ENCODE measurements at regions of chr1 and their contacts with region 1.

Region 1: DNA sequence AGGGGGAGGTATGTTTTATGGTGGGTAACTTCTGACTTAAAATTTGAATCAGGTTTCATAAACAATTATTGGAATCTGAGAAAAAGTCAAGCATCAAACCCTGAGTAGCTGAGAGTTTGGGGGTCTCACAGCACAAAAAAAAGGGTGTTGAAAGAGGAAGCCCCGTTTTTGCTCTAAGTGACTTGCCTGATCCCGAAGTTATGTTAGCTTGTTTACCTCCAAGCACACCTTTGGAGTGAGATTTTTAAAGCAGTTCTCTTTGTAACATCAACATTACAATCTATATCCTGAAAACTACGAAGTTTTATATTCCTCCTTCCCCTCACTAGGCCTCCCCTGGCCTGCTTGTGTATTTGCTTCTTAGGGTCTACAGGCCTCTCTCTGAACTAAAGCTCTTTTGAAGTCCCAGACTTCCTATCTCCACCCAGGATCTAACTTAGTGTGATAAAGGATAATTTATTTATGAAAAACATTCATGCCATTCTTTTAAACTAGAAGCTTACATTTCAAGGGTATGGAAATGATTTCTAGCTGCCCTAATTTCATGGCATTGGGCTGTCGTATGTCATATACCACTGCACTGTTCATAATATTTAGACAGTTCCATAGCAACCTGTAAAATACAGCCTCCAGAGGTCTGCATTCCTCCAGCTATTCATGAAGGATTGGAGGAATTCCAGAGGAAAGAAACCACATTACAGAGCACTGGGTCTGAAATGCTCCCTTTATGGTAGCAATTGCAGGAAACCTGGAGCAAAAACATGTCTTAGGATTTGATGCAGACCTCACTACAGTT is 36.1 kb upstream of the RGS1 start:
- DNase-seq: peak; percentile 25
- ATAC-seq: peak; percentile 16
- H3K4me3 ChIP-seq: no peak overlapping the region
- H3K4me3 Mint-ChIP-seq: peak overlapping the region; percentile 18
- H3K27ac ChIP-seq: peak overlapping the region in 1 of 2 donors; percentile 36
- H3K27ac Mint-ChIP-seq: peak overlapping the region; percentile 8
- H3K4me1 ChIP-seq: peaks cover 13 to 16% of the 10 kb centered on the region in 2 donors
- H3K4me1 Mint-ChIP-seq: peaks cover 35% of the 10 kb centered on the region
- H3K27me3 ChIP-seq: peaks cover 0 to 9% (median 0%) of the 10 kb centered on the region in 4 experiments
- H3K27me3 Mint-ChIP-seq: no peaks in the 10 kb centered on the region
- CTCF ChIP-seq: no peak

Region 2: DNA sequence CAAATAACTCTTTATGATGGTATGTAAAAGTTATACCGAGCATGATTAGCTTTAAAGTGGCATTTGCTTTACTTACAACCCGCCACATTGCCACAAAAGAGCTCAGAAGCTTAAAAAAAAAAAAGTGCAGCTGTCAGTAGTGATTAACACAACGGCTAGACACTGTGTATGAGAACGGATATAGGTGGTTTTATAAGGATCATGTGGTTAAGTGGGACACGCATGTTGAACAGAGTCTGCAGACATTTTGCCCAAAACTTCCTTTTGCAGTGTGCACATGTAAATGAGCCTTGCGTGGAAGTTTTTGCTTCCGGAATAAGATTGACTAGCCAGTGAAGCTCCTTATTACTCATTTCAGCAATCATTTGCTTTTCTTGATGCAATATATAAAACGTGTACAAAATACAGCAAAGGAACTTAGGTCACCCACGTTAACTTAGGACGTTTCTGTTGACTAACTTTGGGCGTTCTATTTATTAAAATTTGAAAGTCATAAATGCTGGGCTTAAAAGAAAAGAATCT is 22.7 kb before region 1 on chr1:
- CTCF ChIA-PET with region 1: interaction called, 21 read pairs
- POLR2A ChIA-PET with region 1: no interaction called
- intact Hi-C with region 1: loop called (anchors 1 kb)
- DNase-seq: peak; percentile 92
- ATAC-seq: peak; percentile 96
- H3K4me3 ChIP-seq: peak overlapping the region in 2 of 5 experiments; percentile 7 to 44
- H3K4me3 Mint-ChIP-seq: peak overlapping the region; percentile 80
- H3K27ac ChIP-seq: peak overlapping the region in 1 of 2 donors; percentile 57
- H3K27ac Mint-ChIP-seq: peak overlapping the region; percentile 64
- H3K4me1 ChIP-seq: peaks cover 43 to 51% of the 10 kb centered on the region in 2 donors
- H3K4me1 Mint-ChIP-seq: peaks cover 52% of the 10 kb centered on the region
- H3K27me3 ChIP-seq: peaks cover 0 to 17% (median 7%) of the 10 kb centered on the region in 4 experiments
- H3K27me3 Mint-ChIP-seq: peaks cover 18% of the 10 kb centered on the region
- CTCF ChIP-seq: no peak

Region 3: GRCh38 chr1:192550922-192551534 is 11.5 kb after region 1 on chr1:
- CTCF ChIA-PET with region 1: interaction called, 3 read pairs
- POLR2A ChIA-PET with region 1: interaction called, 10 read pairs
- intact Hi-C with region 1: loop called (anchors 2 kb)
- DNase-seq: no peak
- ATAC-seq: no peak
- H3K4me3 ChIP-seq: no peak overlapping the region
- H3K4me3 Mint-ChIP-seq: peak overlapping the region; percentile 48
- H3K27ac ChIP-seq: no peak overlapping the region
- H3K27ac Mint-ChIP-seq: peak overlapping the region; percentile 35
- H3K4me1 ChIP-seq: peaks cover 2 to 3% of the 10 kb centered on the region in 2 donors
- H3K4me1 Mint-ChIP-seq: peaks cover 38% of the 10 kb centered on the region
- H3K27me3 ChIP-seq: peaks cover 0 to 9% (median 2%) of the 10 kb centered on the region in 4 experiments
- H3K27me3 Mint-ChIP-seq: peaks cover 17% of the 10 kb centered on the region
- CTCF ChIP-seq: no peak

Region 4: GRCh38 chr1:193059268-193060225 is 520.1 kb after region 1 on chr1 and contains the starts of genes RO60 and UCHL5:
- CTCF ChIA-PET with region 1: no interaction called
- POLR2A ChIA-PET with region 1: no interaction called
- intact Hi-C with region 1: loop called (anchors 2 kb)
- DNase-seq: peak; percentile 96
- ATAC-seq: peak; percentile 95
- H3K4me3 ChIP-seq: peak within 1 kb of the TSS; percentile 62 to 99 (median 91)
- H3K4me3 Mint-ChIP-seq: peak within 1 kb of the TSS; percentile 98
- H3K27ac ChIP-seq: peak within 1 kb of the TSS; percentile 89 to 94
- H3K27ac Mint-ChIP-seq: peak within 1 kb of the TSS; percentile 99
- H3K4me1 ChIP-seq: peaks cover 21 to 25% of the 10 kb centered on the region in 2 donors
- H3K4me1 Mint-ChIP-seq: peaks cover 51% of the 10 kb centered on the region
- H3K27me3 ChIP-seq: no peaks in the 10 kb centered on the region
- H3K27me3 Mint-ChIP-seq: no peaks in the 10 kb centered on the region
- CTCF ChIP-seq: no peak
- total RNA-seq, gene RO60: 66.4 and 78.2 TPM in 2 replicates
- total RNA-seq, gene UCHL5: 31.5 and 32.9 TPM in 2 replicates

Region 5: GRCh38 chr1:193121616-193122593 is 582.4 kb after region 1 on chr1 and contains the start of gene CDC73:
- CTCF ChIA-PET with region 1: no interaction called
- POLR2A ChIA-PET with region 1: no interaction called
- intact Hi-C with region 1: loop called (anchors 1 kb)
- DNase-seq: peak; percentile 99
- ATAC-seq: peak; percentile 89
- H3K4me3 ChIP-seq: peak within 1 kb of the TSS; percentile 87 to 99 (median 93)
- H3K4me3 Mint-ChIP-seq: peak within 1 kb of the TSS; percentile 90
- H3K27ac ChIP-seq: peak within 1 kb of the TSS; percentile 82 to 93
- H3K27ac Mint-ChIP-seq: peak within 1 kb of the TSS; percentile 93
- H3K4me1 ChIP-seq: peaks cover 20 to 21% of the 10 kb centered on the region in 2 donors
- H3K4me1 Mint-ChIP-seq: peaks cover 40% of the 10 kb centered on the region
- H3K27me3 ChIP-seq: no peaks in the 10 kb centered on the region
- H3K27me3 Mint-ChIP-seq: no peaks in the 10 kb centered on the region
- CTCF ChIP-seq: peak; percentile 92
- total RNA-seq, gene CDC73: 71.7 and 77.2 TPM in 2 replicates

Region 6: DNA sequence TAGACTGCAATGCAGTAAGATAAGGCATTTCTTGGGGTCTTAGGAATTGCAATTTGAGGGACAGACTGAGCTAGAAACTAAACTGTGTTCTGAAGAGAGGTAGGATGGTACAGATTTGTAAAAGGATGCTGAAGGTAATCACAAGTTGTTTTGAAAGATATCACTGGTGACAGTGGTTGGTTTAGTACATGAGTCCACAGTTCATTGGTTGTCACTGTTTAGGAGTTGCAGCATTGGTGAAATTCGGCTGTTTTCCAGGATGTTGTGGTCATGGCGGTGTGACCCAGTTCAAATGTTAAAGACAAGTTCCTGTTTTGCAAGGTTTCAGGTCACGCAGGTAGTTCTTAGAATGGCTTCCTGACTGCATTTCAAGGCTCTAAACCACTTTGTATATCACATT is 939.7 kb after region 1 on chr1:
- CTCF ChIA-PET with region 1: no interaction called
- POLR2A ChIA-PET with region 1: no interaction called
- intact Hi-C with region 1: loop called (anchors 1 kb)
- DNase-seq: peak; percentile 89
- ATAC-seq: peak; percentile 95
- H3K4me3 ChIP-seq: peak overlapping the region in 2 of 5 experiments; percentile 1 to 4
- H3K4me3 Mint-ChIP-seq: peak overlapping the region; percentile 71
- H3K27ac ChIP-seq: peak overlapping the region; percentile 59 to 68
- H3K27ac Mint-ChIP-seq: peak overlapping the region; percentile 84
- H3K4me1 ChIP-seq: peaks cover 15 to 39% of the 10 kb centered on the region in 2 donors
- H3K4me1 Mint-ChIP-seq: peaks cover 36% of the 10 kb centered on the region
- H3K27me3 ChIP-seq: no peaks in the 10 kb centered on the region
- H3K27me3 Mint-ChIP-seq: no peaks in the 10 kb centered on the region
- CTCF ChIP-seq: no peak

Measured in B cell (primary cell).